ENCODE measurements at regions of chr3 and their contacts with region 1.

Region 1: DNA sequence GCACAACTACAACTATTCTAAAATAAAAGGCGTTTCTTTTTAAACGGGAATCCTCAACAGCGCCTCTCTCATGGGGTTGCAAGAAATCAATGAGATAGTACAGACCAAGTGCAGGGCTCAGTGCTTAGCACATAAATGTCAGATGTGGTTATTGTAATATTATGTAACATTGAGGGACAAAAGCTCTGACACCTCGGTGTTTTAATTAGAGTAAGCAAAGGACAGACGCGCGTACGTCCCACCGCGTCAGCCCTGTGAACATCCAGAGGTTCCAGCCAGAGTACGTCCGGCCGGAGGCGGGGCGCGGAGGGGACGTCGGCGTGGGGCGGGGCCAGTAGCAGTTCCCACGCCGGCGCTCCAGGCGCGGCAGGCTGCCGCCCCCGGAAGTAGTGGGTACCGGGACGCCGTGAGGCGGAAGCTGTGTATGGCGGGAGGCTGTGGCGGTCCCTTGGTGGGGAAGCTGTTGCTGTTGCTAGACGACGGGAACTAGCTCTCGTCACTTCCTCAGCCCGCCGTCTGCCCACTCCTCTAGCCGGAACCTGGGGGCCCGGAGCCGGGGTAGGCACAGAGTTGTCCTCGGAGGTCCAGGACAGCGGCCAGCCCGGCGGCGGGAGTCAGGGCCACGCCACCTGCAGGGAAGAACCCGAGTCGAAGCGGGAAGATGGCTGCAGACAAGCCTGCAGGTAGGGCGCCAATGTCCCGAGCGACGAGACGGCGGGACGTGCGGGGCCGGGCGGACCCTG is at the start of gene CNOT10:
- DNase-seq: peak; percentile 94 to 97
- ATAC-seq: peak; percentile 92 to 98 (median 94)
- H3K4me3 ChIP-seq: peak within 1 kb of the TSS; percentile 96
- H3K4me3 Mint-ChIP-seq: peak within 1 kb of the TSS; percentile 97
- H3K27ac ChIP-seq: peak within 1 kb of the TSS; percentile 95
- H3K27ac Mint-ChIP-seq: peak within 1 kb of the TSS; percentile 93 to 95
- H3K4me1 ChIP-seq: peaks cover 5% of the 10 kb centered on the region
- H3K4me1 Mint-ChIP-seq: peaks cover 31 to 43% of the 10 kb centered on the region in 2 donors
- H3K27me3 ChIP-seq: no peaks in the 10 kb centered on the region
- H3K27me3 Mint-ChIP-seq: peaks cover 4 to 9% of the 10 kb centered on the region in 2 donors
- CTCF ChIP-seq: no peak
- total RNA-seq, gene CNOT10: 47.1 to 54.3 (median 53.8) TPM

Region 2: DNA sequence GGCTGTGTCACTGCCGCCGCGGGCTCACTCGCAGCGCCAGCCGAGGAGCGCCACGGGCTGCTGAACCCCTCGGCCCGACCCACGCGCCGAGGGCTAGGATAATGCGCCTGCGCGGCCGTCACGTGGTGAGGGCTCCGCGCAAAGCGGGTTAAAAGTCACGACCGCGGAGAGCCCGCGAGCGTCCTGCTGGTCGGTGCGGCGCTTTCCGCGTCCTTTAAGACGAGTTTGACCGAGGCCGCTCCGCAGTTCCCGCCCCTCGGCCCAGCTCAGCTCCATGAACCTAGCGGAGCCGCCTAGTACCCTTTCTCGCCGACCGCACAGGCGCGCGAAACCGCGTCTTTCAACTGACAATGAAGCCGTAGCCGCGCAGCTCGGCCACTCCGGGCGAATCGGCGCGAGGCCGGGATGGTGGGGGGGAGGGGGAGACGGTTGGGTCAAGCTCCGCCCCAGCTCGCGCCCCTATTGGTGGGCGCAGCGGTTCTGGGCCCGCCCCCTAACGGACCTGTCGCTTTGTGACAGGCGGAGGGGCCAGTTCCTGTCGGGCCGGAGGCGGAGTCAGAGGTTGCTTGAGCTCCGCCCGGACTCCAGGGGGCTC is 1152.9 kb before region 1 on chr3:
- intact Hi-C with region 1: loop called (anchors 10 kb)
- DNase-seq: peak; percentile 97 to 99
- ATAC-seq: peak; percentile 84 to 95 (median 85)
- H3K4me3 ChIP-seq: peak overlapping the region; percentile 97
- H3K4me3 Mint-ChIP-seq: peak overlapping the region; percentile 99
- H3K27ac ChIP-seq: peak overlapping the region; percentile 96
- H3K27ac Mint-ChIP-seq: peak overlapping the region; percentile 94 to 99
- H3K4me1 ChIP-seq: peaks cover 6% of the 10 kb centered on the region
- H3K4me1 Mint-ChIP-seq: peaks cover 30 to 33% of the 10 kb centered on the region in 2 donors
- H3K27me3 ChIP-seq: no peaks in the 10 kb centered on the region
- H3K27me3 Mint-ChIP-seq: no peaks in the 10 kb centered on the region
- CTCF ChIP-seq: no peak

Region 3: DNA sequence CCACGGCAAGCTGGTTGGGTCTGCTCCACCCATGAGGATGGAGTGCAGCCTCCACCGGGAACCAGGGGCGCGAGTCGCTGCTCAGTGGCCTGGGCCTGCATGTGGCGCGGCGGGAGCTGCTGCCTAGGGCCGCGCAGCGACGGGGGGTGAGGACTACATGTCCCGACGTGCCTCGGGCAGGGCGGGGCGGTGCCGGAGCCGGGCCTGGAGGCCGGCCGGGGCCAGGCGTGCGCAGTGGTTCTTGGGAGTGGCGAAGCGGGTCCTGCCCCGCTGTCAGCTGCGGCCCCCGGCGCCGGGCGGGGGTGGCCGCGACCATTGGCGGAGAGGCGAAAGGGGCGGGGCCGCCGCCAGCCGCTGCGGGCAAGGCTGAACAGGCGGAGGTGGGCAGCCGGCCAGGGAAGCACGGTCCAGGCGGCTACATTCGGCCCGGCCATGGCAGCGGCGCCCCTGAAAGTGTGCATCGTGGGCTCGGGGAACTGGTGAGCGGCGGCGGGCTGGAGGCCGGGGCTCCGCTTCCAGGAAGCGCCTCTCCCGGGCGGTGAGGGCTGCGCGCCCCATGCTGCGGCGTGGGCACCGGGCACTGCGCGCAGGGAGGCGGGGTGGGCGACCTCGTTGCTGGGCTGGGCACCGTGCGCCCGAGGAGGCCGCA is 578.6 kb before region 1 on chr3 and contains the start of gene GPD1L:
- intact Hi-C with region 1: loop called (anchors 10 kb)
- DNase-seq: peak; percentile 84 to 94
- ATAC-seq: peak; percentile 96 to 100 (median 98)
- H3K4me3 ChIP-seq: peak within 1 kb of the TSS; percentile 49
- H3K4me3 Mint-ChIP-seq: peak within 1 kb of the TSS; percentile 96
- H3K27ac ChIP-seq: no peak within 1 kb of the TSS
- H3K27ac Mint-ChIP-seq: peak within 1 kb of the TSS; percentile 71 to 85
- H3K4me1 ChIP-seq: peaks cover 16% of the 10 kb centered on the region
- H3K4me1 Mint-ChIP-seq: peaks cover 25 to 28% of the 10 kb centered on the region in 2 donors
- H3K27me3 ChIP-seq: no peaks in the 10 kb centered on the region
- H3K27me3 Mint-ChIP-seq: no peaks in the 10 kb centered on the region
- CTCF ChIP-seq: no peak
- total RNA-seq, gene GPD1L: 14.8 to 35.3 (median 28.4) TPM

Region 4: GRCh38 chr3:32502118-32502945 is 182.6 kb before region 1 on chr3 and contains the start of gene CMTM6:
- intact Hi-C with region 1: loop called (anchors 1 kb)
- DNase-seq: peak; percentile 70 to 89
- ATAC-seq: peak; percentile 87 to 92 (median 89)
- H3K4me3 ChIP-seq: peak within 1 kb of the TSS; percentile 62
- H3K4me3 Mint-ChIP-seq: peak within 1 kb of the TSS; percentile 90
- H3K27ac ChIP-seq: peak within 1 kb of the TSS; percentile 84
- H3K27ac Mint-ChIP-seq: peak within 1 kb of the TSS; percentile 84 to 92
- H3K4me1 ChIP-seq: peaks cover 10% of the 10 kb centered on the region
- H3K4me1 Mint-ChIP-seq: peaks cover 29 to 34% of the 10 kb centered on the region in 2 donors
- H3K27me3 ChIP-seq: no peaks in the 10 kb centered on the region
- H3K27me3 Mint-ChIP-seq: no peaks in the 10 kb centered on the region
- CTCF ChIP-seq: no peak
- total RNA-seq, gene CMTM6: 57.4 to 63.6 (median 59.5) TPM

Region 5: DNA sequence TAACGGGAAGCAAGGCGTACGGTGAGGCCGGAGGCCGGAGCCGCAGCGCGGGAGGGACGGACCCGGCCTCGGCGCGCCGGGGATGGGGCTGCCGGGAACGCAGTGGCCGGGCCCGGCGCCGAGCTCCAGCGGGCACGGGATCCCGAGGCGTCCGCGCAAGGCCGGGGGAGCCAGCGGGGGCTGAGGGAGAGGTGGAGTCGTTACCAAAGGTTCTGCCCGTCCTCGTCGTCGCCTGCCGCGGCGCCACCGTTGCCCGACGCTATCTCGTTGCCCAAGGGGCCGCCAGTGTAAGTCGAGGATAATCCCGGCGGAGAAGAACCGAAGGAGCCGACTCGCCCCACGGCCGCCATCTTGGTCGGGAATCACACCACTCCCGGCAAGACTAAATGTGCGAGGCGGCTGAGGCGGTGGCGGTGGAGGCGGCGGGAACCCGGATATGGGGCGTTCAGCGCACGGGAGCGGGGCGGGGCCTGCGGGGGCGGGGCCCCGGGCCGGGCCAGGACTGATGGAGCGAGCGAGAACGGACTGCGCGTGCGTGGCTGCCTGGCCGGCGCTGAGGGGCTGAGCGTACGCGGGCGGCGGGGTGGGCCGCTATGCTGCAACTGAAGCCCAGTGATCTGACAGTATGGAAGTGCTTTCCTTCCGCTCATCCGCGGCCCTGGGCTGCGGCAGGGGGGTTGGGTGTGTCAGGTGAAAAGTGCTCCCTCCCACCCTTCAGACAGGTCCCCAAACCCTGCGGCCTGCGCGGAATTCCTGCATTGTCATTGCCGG is 114.4 kb before region 1 on chr3 and contains the start of gene DYNC1LI1:
- intact Hi-C with region 1: loop called (anchors 2 kb)
- DNase-seq: peak; percentile 91 to 97
- ATAC-seq: peak; percentile 94 to 99 (median 96)
- H3K4me3 ChIP-seq: peak within 1 kb of the TSS; percentile 99
- H3K4me3 Mint-ChIP-seq: peak within 1 kb of the TSS; percentile 96
- H3K27ac ChIP-seq: peak within 1 kb of the TSS; percentile 89
- H3K27ac Mint-ChIP-seq: peak within 1 kb of the TSS; percentile 84 to 87
- H3K4me1 ChIP-seq: peaks cover 10% of the 10 kb centered on the region
- H3K4me1 Mint-ChIP-seq: peaks cover 12 to 32% of the 10 kb centered on the region in 2 donors
- H3K27me3 ChIP-seq: no peaks in the 10 kb centered on the region
- H3K27me3 Mint-ChIP-seq: peaks cover 0 to 5% of the 10 kb centered on the region in 2 donors
- CTCF ChIP-seq: no peak
- total RNA-seq, gene DYNC1LI1: 35.9 to 49.2 (median 39.9) TPM

Region 6: GRCh38 chr3:33096093-33096868 is 411.3 kb after region 1 on chr3:
- intact Hi-C with region 1: loop called (anchors 1 kb)
- DNase-seq: peak; percentile 36 to 68
- ATAC-seq: peak; percentile 52 to 72 (median 57)
- H3K4me3 ChIP-seq: peak overlapping the region; percentile 88
- H3K4me3 Mint-ChIP-seq: peak overlapping the region; percentile 92
- H3K27ac ChIP-seq: peak overlapping the region; percentile 93
- H3K27ac Mint-ChIP-seq: peak overlapping the region; percentile 65 to 87
- H3K4me1 ChIP-seq: peaks cover 18% of the 10 kb centered on the region
- H3K4me1 Mint-ChIP-seq: peaks cover 32 to 33% of the 10 kb centered on the region in 2 donors
- H3K27me3 ChIP-seq: no peaks in the 10 kb centered on the region
- H3K27me3 Mint-ChIP-seq: no peaks in the 10 kb centered on the region
- CTCF ChIP-seq: no peak

Region 7: DNA sequence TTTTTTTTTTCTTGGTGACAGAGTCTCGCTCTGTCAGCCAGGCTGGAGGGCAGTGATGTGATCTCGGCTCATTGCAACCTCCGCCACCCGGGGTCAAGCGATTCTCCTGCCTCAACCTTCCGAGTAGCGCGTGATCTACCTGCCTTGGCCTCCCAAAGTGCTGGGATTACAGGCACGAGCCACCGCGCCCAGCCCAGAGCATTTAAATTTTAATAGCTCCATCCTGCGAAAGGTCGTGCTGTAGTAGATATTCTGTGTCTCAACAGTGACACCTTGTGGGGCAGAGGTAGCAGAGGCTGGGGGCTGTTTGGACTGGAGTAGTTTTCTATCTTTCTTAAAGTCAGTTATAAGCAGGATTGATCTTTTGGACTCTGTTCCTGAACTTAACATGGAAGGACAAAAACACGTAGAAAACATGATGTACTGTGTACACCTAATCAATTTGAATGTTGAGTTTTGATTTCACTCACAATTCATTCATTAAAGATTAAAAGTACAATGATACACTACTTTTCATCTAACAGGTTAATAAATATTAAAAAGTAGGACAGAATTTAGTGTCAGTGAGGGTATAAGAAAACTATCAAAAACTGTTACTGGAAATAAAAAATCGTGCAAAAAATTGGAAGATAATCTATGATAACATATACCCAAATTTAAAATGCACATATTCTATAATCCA is 1102.5 kb after region 1 on chr3:
- intact Hi-C with region 1: no loop called
- DNase-seq: peak; percentile 30 to 85
- ATAC-seq: peak; percentile 76 to 98 (median 97)
- H3K4me3 ChIP-seq: no peak overlapping the region
- H3K4me3 Mint-ChIP-seq: no peak overlapping the region
- H3K27ac ChIP-seq: no peak overlapping the region
- H3K27ac Mint-ChIP-seq: no peak overlapping the region
- H3K4me1 ChIP-seq: peaks cover 4% of the 10 kb centered on the region
- H3K4me1 Mint-ChIP-seq: peaks cover 0 to 8% of the 10 kb centered on the region in 2 donors
- H3K27me3 ChIP-seq: no peaks in the 10 kb centered on the region
- H3K27me3 Mint-ChIP-seq: peaks cover 10 to 11% of the 10 kb centered on the region in 2 donors
- CTCF ChIP-seq: peak; percentile 69